ENCODE measurements at regions of chr19 and their contacts with region 1.

Region 1: GRCh38 chr19:46746281-46747013 is at the start of gene STRN4:
- DNase-seq: no peak
- ATAC-seq: peak; percentile 81
- H3K4me3 ChIP-seq: peak within 1 kb of the TSS; percentile 98
- H3K27ac ChIP-seq: peak within 1 kb of the TSS; percentile 78
- H3K4me1 ChIP-seq: peaks cover 5% of the 10 kb centered on the region
- H3K27me3 ChIP-seq: no peaks in the 10 kb centered on the region
- CTCF ChIP-seq: no peak
- POLR2A ChIP-seq: peak; percentile 76
- RAD21 ChIP-seq: no peak
- total RNA-seq, gene STRN4: 36.7 and 37.8 TPM in 2 replicates

Region 2: DNA sequence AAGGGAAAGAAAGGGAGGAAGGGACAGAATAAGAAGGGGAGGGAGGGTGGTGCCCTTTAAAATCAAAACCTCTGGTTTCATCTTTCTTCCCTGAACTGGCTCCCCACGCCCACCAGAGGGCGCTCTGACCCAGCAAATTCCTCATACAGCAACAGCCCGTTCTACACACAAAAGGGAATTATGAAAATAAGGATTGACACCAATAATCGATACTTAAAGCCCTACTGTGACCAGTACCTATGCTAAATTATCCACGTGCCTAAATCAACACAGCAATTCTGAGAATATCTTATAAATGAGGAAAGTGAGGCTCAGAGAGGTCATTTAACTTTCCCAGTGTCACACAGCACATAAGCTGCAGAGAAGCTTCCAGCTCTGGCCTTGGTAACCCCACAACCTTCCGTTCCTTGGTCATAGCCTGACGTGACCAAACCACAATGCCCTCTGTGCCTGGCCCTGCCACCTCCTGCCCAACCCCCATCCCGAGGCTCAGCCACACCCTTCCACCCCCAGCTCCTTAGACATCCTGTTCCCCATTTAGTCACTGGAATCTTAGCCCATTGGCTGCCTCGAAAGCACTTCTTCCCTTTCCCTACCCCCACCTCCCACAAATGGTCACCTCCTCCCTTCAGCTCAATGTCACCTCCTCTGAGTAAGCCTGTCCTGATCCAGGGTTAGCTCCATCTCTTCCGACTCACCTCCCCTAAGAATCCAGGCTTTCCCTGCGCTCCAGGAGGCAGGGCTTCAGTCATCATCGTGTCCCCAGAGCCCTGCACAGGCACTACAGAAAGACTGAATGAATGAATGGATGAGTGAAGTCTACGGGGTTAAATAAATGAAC is 216.6 kb before region 1 on chr19:
- CTCF ChIA-PET with region 1: no interaction called
- POLR2A ChIA-PET with region 1: no interaction called
- dilution Hi-C with region 1: no loop called
- in situ Hi-C with region 1: no loop called
- intact Hi-C with region 1: loop called (anchors 5 kb)
- DNase-seq: peak; percentile 54
- ATAC-seq: peak; percentile 90
- H3K4me3 ChIP-seq: no peak overlapping the region
- H3K27ac ChIP-seq: no peak overlapping the region
- H3K4me1 ChIP-seq: no peaks in the 10 kb centered on the region
- H3K27me3 ChIP-seq: peaks cover 11% of the 10 kb centered on the region; the same call in 1 of the 2 replicates
- CTCF ChIP-seq: peak; percentile 94
- POLR2A ChIP-seq: no peak
- RAD21 ChIP-seq: peak; percentile 91

Region 3: GRCh38 chr19:46614114-46614722 is 132.2 kb before region 1 on chr19:
- CTCF ChIA-PET with region 1: no interaction called
- POLR2A ChIA-PET with region 1: no interaction called
- dilution Hi-C with region 1: no loop called
- in situ Hi-C with region 1: no loop called
- intact Hi-C with region 1: loop called (anchors 10 kb)
- DNase-seq: peak; percentile 75
- ATAC-seq: peak; percentile 93
- H3K4me3 ChIP-seq: no peak overlapping the region
- H3K27ac ChIP-seq: no peak overlapping the region
- H3K4me1 ChIP-seq: peaks cover 8% of the 10 kb centered on the region
- H3K27me3 ChIP-seq: no peaks in the 10 kb centered on the region
- CTCF ChIP-seq: peak; percentile 87
- POLR2A ChIP-seq: no peak
- RAD21 ChIP-seq: peak; percentile 86

Measured in IMR-90 (cell line).